ENCODE measurements at regions of chr3 and their contacts with region 1.

Region 1: DNA sequence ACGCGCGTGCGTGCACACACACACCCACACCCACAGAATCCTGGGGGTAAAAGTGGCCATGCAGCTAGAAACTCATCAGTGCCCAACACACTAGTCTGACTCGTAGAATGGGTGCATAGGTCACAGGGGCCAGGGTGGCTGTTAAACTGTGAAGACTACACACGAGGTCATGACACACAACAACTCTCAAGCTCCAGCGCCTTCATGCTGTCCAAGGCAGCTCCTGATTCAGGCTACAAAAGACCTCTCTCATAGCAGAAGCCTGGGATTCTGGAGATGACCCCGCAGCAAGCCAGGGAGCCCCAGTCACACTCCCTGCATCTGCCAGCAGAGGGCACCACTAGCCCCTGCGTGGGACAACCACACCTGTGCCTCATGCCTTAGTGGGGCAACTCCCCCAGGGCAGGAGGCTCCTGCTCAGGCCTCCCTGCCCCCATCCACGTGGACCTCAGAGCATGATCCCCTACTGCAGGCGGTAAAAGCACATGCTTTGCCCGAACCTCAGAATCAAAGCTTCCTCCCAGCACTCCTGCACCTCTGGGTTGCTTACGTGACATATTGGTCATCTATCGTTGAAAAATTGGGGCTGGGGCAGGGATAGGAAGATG is 93.1 kb downstream of the LRIG1 start:
- DNase-seq: peak; percentile 39 to 69
- H3K4me3 ChIP-seq: no peak overlapping the region
- H3K27ac ChIP-seq: peak overlapping the region in 1 of 2 donors; percentile 9
- H3K4me1 ChIP-seq: peaks cover 0 to 8% of the 10 kb centered on the region in 2 donors
- H3K27me3 ChIP-seq: no peaks in the 10 kb centered on the region
- CTCF ChIP-seq: peak; percentile 73 to 91 (median 85)
- POLR2A ChIP-seq: no peak

Region 2: DNA sequence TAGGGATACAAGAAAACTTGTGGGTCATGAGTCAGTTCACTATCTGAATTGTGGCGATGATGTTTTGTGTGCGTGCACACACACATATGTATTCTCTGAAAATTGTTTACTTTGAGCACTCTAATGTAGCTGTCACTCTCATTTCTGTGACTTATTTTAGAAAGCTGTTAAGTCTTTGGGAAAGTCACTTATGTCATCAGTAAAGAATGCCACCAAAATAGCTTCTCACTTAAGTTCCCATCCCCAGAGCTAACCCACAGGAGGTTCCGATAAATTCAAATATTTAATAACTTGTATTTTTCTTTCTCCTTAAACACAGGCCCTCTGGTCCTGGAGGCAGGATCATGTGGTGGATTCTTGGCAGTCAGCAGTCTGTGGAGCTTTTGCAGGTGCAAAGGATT is 45.2 kb before region 1 on chr3:
- intact Hi-C with region 1: no loop called
- DNase-seq: no peak
- H3K4me3 ChIP-seq: no peak overlapping the region
- H3K27ac ChIP-seq: no peak overlapping the region
- H3K4me1 ChIP-seq: no peaks in the 10 kb centered on the region
- H3K27me3 ChIP-seq: no peaks in the 10 kb centered on the region
- CTCF ChIP-seq: no peak
- POLR2A ChIP-seq: no peak

Region 3: GRCh38 chr3:66797889-66798560 is 390.3 kb after region 1 on chr3:
- intact Hi-C with region 1: loop called (anchors 10 kb)
- DNase-seq: no peak
- H3K4me3 ChIP-seq: peak overlapping the region in 2 of 3 donors; percentile 35 to 53
- H3K27ac ChIP-seq: peak overlapping the region in 1 of 2 donors; percentile 3
- H3K4me1 ChIP-seq: no peaks in the 10 kb centered on the region
- H3K27me3 ChIP-seq: no peaks in the 10 kb centered on the region
- CTCF ChIP-seq: no peak
- POLR2A ChIP-seq: no peak